ENCODE measurements at regions of chr3 and their contacts with region 1.

Region 1: DNA sequence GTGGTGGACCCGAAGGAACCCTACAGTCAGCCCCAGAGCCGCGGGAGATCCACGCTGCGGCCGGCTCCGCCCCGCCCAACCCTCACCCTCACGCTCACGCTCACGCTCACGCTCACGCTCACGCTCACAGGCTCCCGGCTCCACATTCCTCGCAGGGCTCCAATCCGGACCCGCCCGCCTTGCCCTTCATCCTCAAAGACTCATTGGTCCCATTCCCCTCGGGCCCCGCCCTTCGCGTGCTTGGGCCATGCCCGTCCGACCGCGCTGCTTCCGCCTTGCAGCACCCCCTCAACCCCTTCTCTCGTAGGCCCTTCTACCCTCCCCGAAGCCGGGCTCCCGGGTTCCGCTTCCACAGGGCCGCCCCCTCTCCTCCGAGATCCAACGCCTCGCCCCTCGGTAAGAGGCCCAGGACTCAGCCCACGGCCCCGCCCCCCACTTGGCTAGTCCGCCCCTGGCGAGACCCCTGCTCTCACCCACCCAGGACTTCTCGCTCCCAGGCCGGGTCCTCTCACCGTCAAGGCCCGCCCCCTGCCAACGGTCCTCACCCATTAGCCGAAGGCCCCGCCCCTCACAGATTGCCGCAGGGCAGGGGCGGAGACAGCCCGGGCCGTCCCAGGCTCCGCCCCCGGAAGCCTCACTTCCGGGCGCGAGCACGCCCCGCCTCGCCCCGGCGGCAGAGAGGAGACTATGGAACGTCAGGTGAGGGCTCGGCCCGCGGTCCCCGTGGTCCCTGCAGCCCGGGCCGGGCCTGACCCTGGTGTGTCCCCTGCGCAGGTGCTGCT is at the start of gene APEH:
- DNase-seq: peak; percentile 93 to 98
- ATAC-seq: peak; percentile 86 to 88
- H3K4me3 ChIP-seq: peak within 1 kb of the TSS; percentile 80 to 98 (median 92)
- H3K27ac ChIP-seq: peak within 1 kb of the TSS; percentile 91 to 96 (median 94)
- H3K4me1 ChIP-seq: peaks cover 16 to 17% of the 10 kb centered on the region in 2 donors
- H3K27me3 ChIP-seq: no peaks in the 10 kb centered on the region
- CTCF ChIP-seq: peak in 1 of 5 experiments; percentile 10
- POLR2A ChIP-seq: peak; percentile 75 to 82
- total RNA-seq, gene APEH: 103 to 140 (median 108) TPM

Region 2: DNA sequence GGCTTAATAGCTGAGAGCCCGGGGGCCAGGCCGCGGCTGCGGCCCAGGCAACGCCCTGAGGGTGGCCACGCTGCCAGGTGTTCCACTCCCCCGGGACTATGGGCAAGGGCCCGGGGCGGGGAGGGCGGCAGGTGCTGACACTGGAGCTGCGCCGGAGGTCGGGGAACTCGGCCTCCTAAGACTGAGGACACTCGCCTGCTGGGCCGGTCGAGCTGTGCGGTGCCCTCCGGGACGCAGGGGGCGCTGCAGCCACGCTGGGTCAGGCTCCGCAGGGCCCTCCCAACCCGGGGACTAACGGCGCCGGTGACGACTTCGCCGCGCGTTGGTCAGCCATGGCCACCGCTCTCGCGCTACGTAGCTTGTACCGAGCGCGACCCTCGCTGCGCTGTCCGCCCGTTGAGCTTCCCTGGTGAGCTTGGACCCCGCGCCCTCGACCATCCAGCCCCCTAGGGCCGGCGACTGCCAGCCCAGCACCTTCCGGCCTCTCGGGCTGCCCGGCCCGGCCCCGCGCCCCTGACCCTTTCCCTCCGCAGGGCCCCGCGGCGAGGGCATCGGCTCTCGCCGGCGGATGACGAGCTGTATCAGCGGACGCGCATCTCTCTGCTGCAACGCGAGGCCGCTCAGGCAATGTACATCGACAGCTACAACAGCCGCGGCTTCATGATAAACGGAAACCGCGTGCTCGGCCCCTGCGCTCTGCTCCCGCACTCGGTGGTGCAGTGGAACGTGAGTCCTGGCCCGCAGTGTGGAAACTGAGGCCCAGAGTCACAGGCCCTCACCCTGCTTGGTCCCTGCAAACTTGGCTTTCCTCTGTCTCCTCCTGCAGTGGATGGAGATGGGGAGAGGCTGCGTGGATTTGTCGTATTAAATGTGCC is 651.9 kb before region 1 on chr3 and contains the start of gene NDUFAF3:
- in situ Hi-C with region 1: no loop called
- intact Hi-C with region 1: loop called (anchors 5 kb)
- DNase-seq: peak; percentile 91 to 95
- ATAC-seq: peak; percentile 76 to 79
- H3K4me3 ChIP-seq: peak within 1 kb of the TSS; percentile 77 to 97 (median 90)
- H3K27ac ChIP-seq: peak within 1 kb of the TSS; percentile 97 to 100 (median 98)
- H3K4me1 ChIP-seq: peaks cover 42 to 51% of the 10 kb centered on the region in 2 donors
- H3K27me3 ChIP-seq: no peaks in the 10 kb centered on the region
- CTCF ChIP-seq: peak; percentile 96 to 99 (median 99)
- POLR2A ChIP-seq: peak in 1 of 2 donors; percentile 87
- total RNA-seq, gene NDUFAF3: 129 to 181 (median 148) TPM

Region 3: GRCh38 chr3:49469936-49470713 is 203.8 kb before region 1 on chr3 and contains the start of gene DAG1:
- in situ Hi-C with region 1: no loop called
- intact Hi-C with region 1: loop called (anchors 5 kb)
- DNase-seq: peak; percentile 96 to 99
- ATAC-seq: peak; percentile 73 to 78
- H3K4me3 ChIP-seq: peak within 1 kb of the TSS; percentile 62 to 78 (median 71)
- H3K27ac ChIP-seq: peak within 1 kb of the TSS; percentile 96 to 99 (median 98)
- H3K4me1 ChIP-seq: peaks cover 38 to 39% of the 10 kb centered on the region in 2 donors
- H3K27me3 ChIP-seq: no peaks in the 10 kb centered on the region
- CTCF ChIP-seq: peak in 3 of 5 experiments; percentile 7 to 15 (median 8)
- POLR2A ChIP-seq: peak; percentile 96 to 99
- total RNA-seq, gene DAG1: 95.0 to 177 (median 109) TPM

Region 4: GRCh38 chr3:49539659-49540560 is 134.0 kb before region 1 on chr3:
- in situ Hi-C with region 1: loop called (anchors 5 to 10 kb)
- intact Hi-C with region 1: loop called (anchors 1 kb)
- DNase-seq: peak; percentile 82 to 89
- ATAC-seq: peak; percentile 83 to 84
- H3K4me3 ChIP-seq: peak overlapping the region; percentile 49 to 83 (median 58)
- H3K27ac ChIP-seq: peak overlapping the region; percentile 79 to 93 (median 87)
- H3K4me1 ChIP-seq: peaks cover 27 to 36% of the 10 kb centered on the region in 2 donors
- H3K27me3 ChIP-seq: no peaks in the 10 kb centered on the region
- CTCF ChIP-seq: peak; percentile 86 to 96 (median 95)
- POLR2A ChIP-seq: peak; percentile 53 to 66

Region 5: DNA sequence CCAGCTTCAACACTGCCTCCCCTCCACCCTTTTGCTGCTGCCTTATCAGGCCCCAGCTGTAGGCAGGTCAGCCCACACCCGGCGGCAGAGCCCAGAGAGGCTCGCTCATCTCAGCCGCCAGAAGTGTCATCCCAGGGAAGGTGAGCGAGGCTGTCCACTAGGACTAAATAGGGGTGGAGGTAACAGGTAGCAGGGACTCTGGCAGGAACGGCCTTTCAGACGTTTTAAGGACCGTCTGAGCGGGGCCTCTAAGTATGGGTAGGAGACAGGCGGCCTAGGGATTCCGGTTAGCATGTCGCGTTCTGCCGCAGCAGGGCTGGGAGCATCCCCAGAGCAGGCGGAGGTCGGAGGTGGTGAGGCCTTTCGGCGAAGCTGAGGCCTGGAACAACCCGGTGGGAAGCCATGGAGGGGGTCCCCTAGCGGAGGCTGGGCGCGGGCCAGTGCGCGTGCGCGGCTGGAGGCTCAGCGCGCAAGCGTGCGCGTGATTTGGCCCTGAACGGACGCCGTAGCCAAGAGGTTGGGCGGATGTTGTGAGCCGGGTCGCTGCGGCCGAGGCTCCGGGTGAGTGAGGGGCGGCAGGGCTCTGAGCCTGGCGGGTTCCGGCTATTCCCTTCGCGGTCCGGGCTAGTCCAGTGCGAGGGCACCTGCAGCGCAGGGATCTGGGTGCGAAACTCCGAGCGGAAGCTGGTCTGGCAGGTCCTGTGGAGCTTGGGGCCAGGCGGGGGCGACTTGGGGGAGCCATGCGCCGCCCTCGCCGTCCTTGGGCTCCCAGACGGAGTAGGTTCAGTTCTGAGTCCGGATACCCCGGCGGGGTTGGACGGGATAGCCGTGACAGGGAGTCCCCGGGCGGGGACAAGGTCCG is 15.4 kb after region 1 on chr3 and contains the starts of genes MST1 and RNF123:
- in situ Hi-C with region 1: no loop called
- intact Hi-C with region 1: loop called (anchors 2 kb)
- DNase-seq: peak; percentile 78 to 86
- ATAC-seq: peak; percentile 73 to 81
- H3K4me3 ChIP-seq: peak within 1 kb of the TSS; percentile 91 to 100 (median 98)
- H3K27ac ChIP-seq: peak within 1 kb of the TSS; percentile 92 to 99 (median 96)
- H3K4me1 ChIP-seq: peaks cover 47 to 63% of the 10 kb centered on the region in 2 donors
- H3K27me3 ChIP-seq: peaks cover 0 to 3% (median 0%) of the 10 kb centered on the region in 3 donors
- CTCF ChIP-seq: peak in 4 of 5 experiments; percentile 27 to 51 (median 41)
- POLR2A ChIP-seq: peak; percentile 82 to 83
- total RNA-seq, gene MST1: 0.10 to 4.8 (median 2.4) TPM
- total RNA-seq, gene RNF123: 82.8 to 132 (median 128) TPM

Region 6: DNA sequence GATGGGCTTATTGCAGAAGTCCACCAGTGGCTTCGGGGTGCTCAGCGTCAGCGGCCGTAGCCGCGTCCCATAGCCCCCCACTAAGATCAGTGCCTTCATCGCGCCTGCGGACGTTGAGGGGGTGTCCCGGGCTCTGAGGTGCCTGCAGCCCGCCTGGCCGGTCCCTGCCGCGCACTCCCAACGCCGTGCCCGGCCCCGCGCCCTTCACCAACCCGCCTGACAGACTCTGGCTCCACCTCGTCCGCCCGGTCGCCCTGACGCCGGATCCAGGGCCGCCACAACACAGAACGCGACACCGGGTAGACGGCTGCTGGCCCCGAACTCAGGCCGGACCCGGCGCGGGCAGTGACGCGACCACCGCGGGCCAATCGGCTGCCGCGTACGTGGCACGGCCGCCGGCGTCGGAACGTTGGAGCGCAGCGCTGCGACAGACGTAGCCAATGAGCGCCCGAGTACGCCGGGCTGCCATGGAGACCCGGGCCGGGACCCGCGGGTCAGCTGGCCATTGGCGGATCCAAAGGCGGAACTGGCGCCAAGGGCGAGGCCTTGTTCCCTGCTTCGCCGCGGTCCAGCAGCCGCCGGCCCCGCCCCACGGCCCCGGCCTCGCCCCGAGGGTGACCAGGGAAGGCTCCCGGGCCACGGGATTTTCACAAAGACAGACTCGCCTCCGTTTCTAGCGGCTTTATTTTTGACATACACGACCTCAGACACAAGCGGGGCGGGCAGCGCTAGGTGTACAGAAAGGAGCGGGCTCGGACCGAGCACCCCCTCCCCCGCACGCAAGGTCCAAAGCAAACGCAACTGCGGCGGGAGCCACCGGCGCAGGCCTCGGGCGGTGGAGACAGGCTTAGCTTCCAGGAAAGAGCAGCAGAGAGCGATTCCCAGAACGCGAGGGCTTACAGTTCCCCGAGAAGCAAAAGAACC is 50.0 kb after region 1 on chr3 and contains the start of gene GMPPB:
- in situ Hi-C with region 1: no loop called
- intact Hi-C with region 1: loop called (anchors 1 kb)
- DNase-seq: peak; percentile 96 to 98
- ATAC-seq: peak; percentile 82
- H3K4me3 ChIP-seq: peak within 1 kb of the TSS; percentile 79 to 99 (median 92)
- H3K27ac ChIP-seq: peak within 1 kb of the TSS; percentile 88 to 100 (median 96)
- H3K4me1 ChIP-seq: peaks cover 27 to 38% of the 10 kb centered on the region in 2 donors
- H3K27me3 ChIP-seq: no peaks in the 10 kb centered on the region
- CTCF ChIP-seq: no peak
- POLR2A ChIP-seq: peak; percentile 78 to 83
- total RNA-seq, gene GMPPB: 14.2 to 26.1 (median 17.0) TPM

Region 7: GRCh38 chr3:49984394-49984793 is 310.5 kb after region 1 on chr3:
- in situ Hi-C with region 1: no loop called
- intact Hi-C with region 1: no loop called
- DNase-seq: no peak
- ATAC-seq: no peak
- H3K4me3 ChIP-seq: no peak overlapping the region
- H3K27ac ChIP-seq: no peak overlapping the region
- H3K4me1 ChIP-seq: no peaks in the 10 kb centered on the region
- H3K27me3 ChIP-seq: no peaks in the 10 kb centered on the region
- CTCF ChIP-seq: no peak
- POLR2A ChIP-seq: no peak